Vagina (tissue), 2 donors: ENCODE measurements at regions of chr9 and their contacts with region 1.

Region 1: GRCh38 chr9:96232539-96233241 is 69.3 kb downstream of the HSD17B3 start:
- DNase-seq: no peak
- H3K4me3 ChIP-seq: no peak overlapping the region
- H3K27ac ChIP-seq: peak overlapping the region; percentile 69
- H3K4me1 ChIP-seq: no peaks in the 10 kb centered on the region
- H3K27me3 ChIP-seq: no peaks in the 10 kb centered on the region
- CTCF ChIP-seq: peak in 2 of 3 experiments; percentile 67 to 72
- POLR2A ChIP-seq: no peak

Region 2: GRCh38 chr9:96149533-96150280 is 83.0 kb before region 1 on chr9:
- intact Hi-C with region 1: no loop called
- DNase-seq: no peak
- H3K4me3 ChIP-seq: no peak overlapping the region
- H3K27ac ChIP-seq: no peak overlapping the region
- H3K4me1 ChIP-seq: peaks cover 13% of the 10 kb centered on the region
- H3K27me3 ChIP-seq: no peaks in the 10 kb centered on the region
- CTCF ChIP-seq: no peak
- POLR2A ChIP-seq: no peak

Region 3: DNA sequence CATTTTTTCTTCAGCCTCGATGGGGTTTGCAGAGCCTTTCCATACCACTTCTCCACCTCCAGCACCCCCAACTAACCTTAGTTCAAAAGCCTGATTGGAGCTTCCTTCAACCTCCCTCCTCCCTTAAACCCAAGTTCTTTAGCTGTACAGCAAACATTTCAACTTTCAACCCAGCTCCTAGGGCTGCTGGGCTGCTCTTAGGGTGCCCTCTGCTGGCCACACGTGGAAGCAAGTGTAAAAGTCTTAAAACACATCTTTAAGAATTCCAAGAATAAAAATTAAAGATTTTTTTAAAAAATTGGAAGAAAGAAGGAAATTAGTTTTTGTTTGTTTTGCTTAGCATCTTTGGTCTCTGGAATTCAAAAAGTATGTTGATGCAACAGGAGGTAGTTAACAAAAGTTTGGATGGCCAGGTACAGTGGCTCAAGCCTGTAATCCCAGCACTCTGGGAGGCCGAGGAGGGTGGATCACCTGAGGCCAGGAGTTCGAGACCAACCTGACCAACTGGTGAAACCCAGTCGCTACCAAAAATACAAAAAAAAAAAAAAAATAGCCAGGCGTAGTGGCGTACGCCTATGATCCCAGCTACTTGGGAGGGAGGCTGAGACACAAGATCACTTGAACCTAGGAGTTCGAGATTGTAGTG is 84.8 kb after region 1 on chr9:
- intact Hi-C with region 1: loop called (anchors 10 kb)
- DNase-seq: no peak
- H3K4me3 ChIP-seq: no peak overlapping the region
- H3K27ac ChIP-seq: no peak overlapping the region
- H3K4me1 ChIP-seq: no peaks in the 10 kb centered on the region
- H3K27me3 ChIP-seq: no peaks in the 10 kb centered on the region
- CTCF ChIP-seq: peak; percentile 47 to 79 (median 77)
- POLR2A ChIP-seq: no peak